Dendritic cell treated with granulocyte-macrophage colony-stimulating factor and Interleukin-4, amounts not matched to agents 40 ng/mL and 50 ng/mL, for 4 days (primary cell): ENCODE measurements at regions of chr2 and their contacts with region 1.

Region 1: GRCh38 chr2:68857855-68858456 is 13.2 kb downstream of the BMP10 start:
- H3K4me3 Mint-ChIP-seq: no peak overlapping the region
- H3K27ac Mint-ChIP-seq: peak overlapping the region; percentile 89
- H3K4me1 Mint-ChIP-seq: peaks cover 76% of the 10 kb centered on the region
- H3K27me3 Mint-ChIP-seq: no peaks in the 10 kb centered on the region

Region 2: DNA sequence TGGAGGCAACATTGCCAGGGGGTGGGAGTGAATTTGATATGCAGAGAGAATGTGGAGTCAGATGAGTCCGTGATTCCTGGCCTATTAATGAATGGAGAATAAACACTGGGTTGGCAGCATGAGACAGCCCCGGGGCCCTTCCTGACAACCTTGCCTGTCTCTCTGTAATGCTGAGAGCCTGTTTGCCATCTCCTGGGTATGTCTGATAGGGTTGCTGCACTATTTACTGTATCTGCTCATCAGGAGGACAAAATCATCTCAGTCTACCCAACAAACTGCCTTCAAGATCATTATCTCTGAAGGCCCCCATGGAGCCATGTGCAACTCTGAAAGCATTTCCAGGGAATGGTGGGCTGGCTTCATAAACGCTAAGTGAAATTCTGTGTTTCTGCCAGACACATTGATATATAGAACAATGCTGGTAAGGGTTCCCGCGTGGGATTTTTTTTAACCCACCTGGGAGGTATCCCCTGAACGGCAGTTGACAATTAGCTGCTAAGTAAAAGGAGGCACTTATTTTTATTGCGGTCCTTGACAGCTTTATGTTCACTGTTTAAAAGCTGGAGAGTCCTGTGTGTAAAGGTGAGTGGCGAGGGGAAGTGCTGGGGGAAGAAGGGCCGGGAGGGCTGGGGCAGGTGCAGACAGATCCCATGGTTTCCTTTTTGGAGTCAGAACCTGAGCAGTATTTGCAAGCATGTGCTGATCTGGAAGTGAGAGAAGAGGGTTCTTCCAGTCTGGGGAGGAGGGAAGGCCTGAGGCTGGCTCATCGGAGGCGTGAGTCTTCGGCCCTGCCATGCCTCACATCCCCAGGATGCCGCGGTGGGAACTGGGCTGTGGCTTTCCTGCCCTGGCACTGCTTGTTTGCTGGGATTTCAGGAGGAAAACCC is 58.6 kb before region 1 on chr2:
- intact Hi-C with region 1: loop called (anchors 2 kb)
- H3K4me3 Mint-ChIP-seq: no peak overlapping the region
- H3K27ac Mint-ChIP-seq: peak overlapping the region; percentile 77
- H3K4me1 Mint-ChIP-seq: peaks cover 60% of the 10 kb centered on the region
- H3K27me3 Mint-ChIP-seq: no peaks in the 10 kb centered on the region

Region 3: GRCh38 chr2:68909793-68910674 is 52.1 kb after region 1 on chr2:
- intact Hi-C with region 1: loop called (anchors 5 kb)
- H3K4me3 Mint-ChIP-seq: no peak overlapping the region
- H3K27ac Mint-ChIP-seq: peak overlapping the region; percentile 62
- H3K4me1 Mint-ChIP-seq: peaks cover 26% of the 10 kb centered on the region
- H3K27me3 Mint-ChIP-seq: no peaks in the 10 kb centered on the region